HCT116 (cell line): ENCODE measurements at regions of chr2 and their contacts with region 1.

Region 1: DNA sequence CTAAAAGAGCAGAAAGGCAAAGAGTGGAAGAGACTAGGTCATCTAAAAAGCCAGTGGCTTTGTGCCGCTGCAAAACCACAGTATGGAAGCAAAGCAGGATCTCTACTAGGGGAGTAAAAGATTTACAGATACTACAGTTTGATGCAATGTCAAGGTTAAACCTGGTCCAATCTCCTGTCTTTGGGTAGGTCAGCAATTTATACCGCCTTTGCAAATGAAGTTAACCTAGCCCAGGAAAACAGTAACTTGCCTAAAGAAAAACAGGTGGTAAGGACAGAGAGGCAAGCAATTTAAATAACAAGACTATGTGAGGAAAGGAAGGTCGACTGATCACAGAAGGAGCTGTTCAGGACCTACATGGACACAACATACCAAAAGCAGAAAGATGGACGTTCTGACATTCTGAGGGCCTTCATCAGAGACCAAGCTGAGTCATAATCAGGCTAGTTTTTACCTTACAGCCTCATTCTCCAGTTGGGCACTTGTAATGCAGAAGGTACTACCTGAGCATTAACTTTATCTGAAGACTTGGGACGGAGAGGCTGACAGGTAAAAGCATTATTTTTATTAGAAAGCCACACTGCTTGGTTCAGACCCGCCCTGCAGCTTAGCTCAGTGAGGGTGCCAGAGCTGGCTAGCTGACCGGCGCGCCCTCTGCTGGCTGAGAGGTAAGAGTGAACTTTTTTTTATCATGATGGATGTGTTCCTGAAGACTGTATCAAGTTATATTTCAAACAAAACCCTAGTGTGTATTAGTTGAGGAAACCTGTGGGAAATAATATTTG is 15.9 kb downstream of the CDKL4 start:
- DNase-seq: peak; percentile 29
- ATAC-seq: peak; percentile 83
- H3K4me3 ChIP-seq: no peak overlapping the region
- H3K27ac ChIP-seq: no peak overlapping the region
- H3K4me1 ChIP-seq: 0 out of 4 replicates have a peak, but pooled peaks cover 0 to 3% of the 10 kb centered on the region in 2 experiments
- H3K27me3 ChIP-seq: no peaks in the 10 kb centered on the region
- CTCF ChIP-seq: peak; percentile 84 to 90 (median 86); a peak in 5 of 6 replicates
- POLR2A ChIP-seq: no peak
- RAD21 ChIP-seq: peak; percentile 85

Region 2: DNA sequence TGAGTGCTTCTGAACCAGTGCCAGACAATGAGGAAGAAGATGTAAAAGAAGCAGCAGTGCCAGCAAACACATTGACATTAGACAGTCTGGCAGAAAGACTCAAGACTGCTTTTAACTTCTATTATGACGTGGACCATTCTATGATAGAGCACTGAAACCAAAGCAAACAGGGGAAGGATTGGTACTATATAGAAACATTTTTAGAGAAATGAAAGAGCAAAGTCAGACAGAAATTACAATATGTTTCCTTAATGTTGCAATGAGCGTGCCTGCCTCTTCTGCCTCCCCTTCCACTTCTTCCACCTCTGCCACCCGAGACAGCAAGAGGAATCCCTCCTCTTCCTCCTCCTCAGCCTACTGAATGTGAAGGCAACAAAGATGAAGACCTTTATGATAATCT is 391.8 kb before region 1 on chr2:
- CTCF ChIA-PET with region 1: no interaction called
- POLR2A ChIA-PET with region 1: no interaction called
- RAD21 ChIA-PET with region 1: no interaction called
- intact Hi-C with region 1: no loop called
- DNase-seq: no peak
- ATAC-seq: no peak
- H3K4me3 ChIP-seq: no peak overlapping the region
- H3K27ac ChIP-seq: no peak overlapping the region
- H3K4me1 ChIP-seq: no peaks in the 10 kb centered on the region
- H3K27me3 ChIP-seq: no peaks in the 10 kb centered on the region
- CTCF ChIP-seq: no peak
- POLR2A ChIP-seq: no peak
- RAD21 ChIP-seq: no peak

Region 3: DNA sequence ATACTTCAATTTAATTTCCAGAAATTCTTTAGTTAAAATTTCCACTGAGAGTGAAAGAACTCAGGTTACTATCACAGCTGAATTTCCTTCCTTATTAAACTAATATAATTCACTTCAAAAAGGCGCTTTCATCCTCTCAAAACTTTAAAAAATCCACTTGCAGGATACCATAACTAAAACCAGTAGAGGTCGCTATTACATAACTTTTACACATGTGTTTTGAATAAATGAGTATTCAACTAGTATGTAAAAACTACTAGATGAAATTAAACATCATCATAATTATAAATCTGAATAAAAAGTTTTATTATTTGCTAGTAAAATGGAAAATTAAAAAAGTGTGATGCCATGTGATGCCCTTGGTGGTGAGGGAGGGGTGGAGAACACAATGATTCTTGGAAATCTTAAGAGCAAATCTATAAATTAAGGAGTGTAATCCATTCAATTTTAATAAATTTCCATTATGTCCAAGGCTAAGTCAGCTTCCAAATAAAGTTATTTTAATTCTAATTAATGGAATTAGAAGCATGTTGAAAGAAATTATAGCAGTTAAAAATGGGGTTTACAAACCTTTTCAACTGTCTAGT is 168.4 kb before region 1 on chr2:
- CTCF ChIA-PET with region 1: interaction called, 141 read pairs
- POLR2A ChIA-PET with region 1: no interaction called
- RAD21 ChIA-PET with region 1: no interaction called
- intact Hi-C with region 1: loop called (anchors 1 kb)
- DNase-seq: peak; percentile 18
- ATAC-seq: no peak
- H3K4me3 ChIP-seq: no peak overlapping the region
- H3K27ac ChIP-seq: no peak overlapping the region
- H3K4me1 ChIP-seq: no peaks in the 10 kb centered on the region
- H3K27me3 ChIP-seq: no peaks in the 10 kb centered on the region
- CTCF ChIP-seq: peak; percentile 43 to 78 (median 76); a peak in 5 of 6 replicates
- POLR2A ChIP-seq: no peak
- RAD21 ChIP-seq: peak; percentile 83

Region 4: DNA sequence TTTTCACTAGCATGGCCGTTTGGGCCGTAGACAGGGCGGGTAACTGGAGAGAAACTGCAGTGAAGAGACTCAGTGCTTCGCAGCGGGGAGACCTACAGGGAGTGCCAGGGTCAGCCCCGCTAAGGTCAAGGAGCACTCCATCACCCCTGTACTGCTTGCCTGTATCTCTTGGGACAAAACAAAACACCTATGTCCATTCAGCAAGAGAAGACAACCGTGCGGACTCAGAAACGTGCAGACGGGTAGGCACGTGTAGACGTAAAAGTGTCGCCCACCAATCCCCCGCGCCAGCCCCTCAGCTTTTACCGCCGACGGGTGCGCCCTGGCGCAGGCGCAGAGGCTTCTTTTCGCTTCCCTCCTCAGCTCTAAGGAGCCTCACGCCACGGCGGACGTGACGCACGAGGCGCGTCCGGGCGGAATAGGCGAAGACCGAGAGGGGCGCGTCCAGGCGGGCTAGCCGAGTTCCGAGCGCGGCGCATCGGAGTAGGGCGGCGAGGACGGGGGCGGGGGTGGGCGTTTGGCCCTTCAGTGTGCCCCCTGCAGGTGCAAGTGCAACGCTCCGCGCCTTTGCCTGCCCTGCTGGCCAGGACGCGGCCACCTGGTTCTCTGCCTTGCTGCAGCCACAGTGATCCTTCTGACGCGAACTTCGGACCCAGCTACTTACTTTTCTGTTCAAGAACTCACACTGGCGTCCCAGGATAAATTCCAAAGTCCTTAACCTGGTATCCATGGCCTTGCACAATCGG is 103.6 kb before region 1 on chr2:
- CTCF ChIA-PET with region 1: interaction called, 7 read pairs
- POLR2A ChIA-PET with region 1: no interaction called
- RAD21 ChIA-PET with region 1: interaction called in 1 of 2 experiments, 3 read pairs
- intact Hi-C with region 1: loop called (anchors 5 kb)
- DNase-seq: peak; percentile 95
- ATAC-seq: peak; percentile 81
- H3K4me3 ChIP-seq: peak overlapping the region; percentile 70 to 96
- H3K27ac ChIP-seq: peak overlapping the region; percentile 80
- H3K4me1 ChIP-seq: peaks cover 14 to 38% of the 10 kb centered on the region in 2 experiments
- H3K27me3 ChIP-seq: no peaks in the 10 kb centered on the region
- CTCF ChIP-seq: peak; percentile 9 to 65 (median 47); a peak in 4 of 6 replicates
- POLR2A ChIP-seq: peak; percentile 69
- RAD21 ChIP-seq: no peak; the same call in 1 of the 2 replicates

Region 5: DNA sequence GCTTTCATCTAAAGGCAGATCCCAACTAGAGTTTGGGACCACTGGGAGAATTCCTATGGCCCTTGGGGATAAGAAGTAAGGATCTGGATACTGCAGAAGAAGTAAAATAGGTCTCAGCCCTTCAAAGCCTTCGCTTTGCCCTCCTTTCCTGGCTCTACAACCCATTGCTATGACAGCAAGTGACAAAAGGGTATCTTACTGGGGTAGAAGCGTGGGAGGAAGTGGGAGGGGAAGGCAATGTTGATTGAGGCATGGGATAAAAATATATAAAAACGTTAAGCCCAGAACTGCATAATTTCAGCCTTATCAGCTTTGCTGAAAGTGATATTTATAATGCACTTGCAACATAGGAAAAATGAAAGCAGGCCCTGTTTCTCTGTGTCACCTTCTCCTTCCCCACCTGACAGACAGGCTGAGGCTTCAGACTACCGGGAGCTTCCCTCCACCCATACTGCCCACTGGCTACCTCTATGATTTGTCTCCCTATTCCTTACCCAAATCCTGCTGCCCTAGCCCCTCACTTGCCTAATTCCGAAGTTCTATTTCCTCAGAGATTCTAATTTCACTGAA is 92.0 kb before region 1 on chr2:
- CTCF ChIA-PET with region 1: no interaction called
- POLR2A ChIA-PET with region 1: no interaction called
- RAD21 ChIA-PET with region 1: no interaction called
- intact Hi-C with region 1: no loop called
- DNase-seq: no peak
- ATAC-seq: no peak
- H3K4me3 ChIP-seq: no peak overlapping the region
- H3K27ac ChIP-seq: no peak overlapping the region
- H3K4me1 ChIP-seq: no peaks in the 10 kb centered on the region
- H3K27me3 ChIP-seq: no peaks in the 10 kb centered on the region
- CTCF ChIP-seq: no peak
- POLR2A ChIP-seq: no peak
- RAD21 ChIP-seq: no peak